B cell (primary cell): ENCODE measurements at regions of chr5 and their contacts with region 1.

Region 1: GRCh38 chr5:138035605-138036537 is 3.0 kb upstream of the FAM13B start:
- DNase-seq: peak; percentile 86
- ATAC-seq: peak; percentile 35
- H3K4me3 ChIP-seq: no peak overlapping the region
- H3K4me3 Mint-ChIP-seq: peak overlapping the region; percentile 4
- H3K27ac ChIP-seq: no peak overlapping the region
- H3K27ac Mint-ChIP-seq: no peak overlapping the region
- H3K4me1 ChIP-seq: peaks cover 19 to 26% of the 10 kb centered on the region in 2 donors
- H3K4me1 Mint-ChIP-seq: peaks cover 32% of the 10 kb centered on the region
- H3K27me3 ChIP-seq: no peaks in the 10 kb centered on the region
- H3K27me3 Mint-ChIP-seq: no peaks in the 10 kb centered on the region
- CTCF ChIP-seq: peak; percentile 97

Region 2: GRCh38 chr5:137695651-137696428 is 340.0 kb before region 1 on chr5:
- CTCF ChIA-PET with region 1: no interaction called
- POLR2A ChIA-PET with region 1: no interaction called
- intact Hi-C with region 1: no loop called
- DNase-seq: peak; percentile 7
- ATAC-seq: no peak
- H3K4me3 ChIP-seq: no peak overlapping the region
- H3K4me3 Mint-ChIP-seq: no peak overlapping the region
- H3K27ac ChIP-seq: no peak overlapping the region
- H3K27ac Mint-ChIP-seq: peak overlapping the region; percentile 3
- H3K4me1 ChIP-seq: peaks cover 7 to 10% of the 10 kb centered on the region in 2 donors
- H3K4me1 Mint-ChIP-seq: peaks cover 10% of the 10 kb centered on the region
- H3K27me3 ChIP-seq: no peaks in the 10 kb centered on the region
- H3K27me3 Mint-ChIP-seq: no peaks in the 10 kb centered on the region
- CTCF ChIP-seq: no peak

Region 3: DNA sequence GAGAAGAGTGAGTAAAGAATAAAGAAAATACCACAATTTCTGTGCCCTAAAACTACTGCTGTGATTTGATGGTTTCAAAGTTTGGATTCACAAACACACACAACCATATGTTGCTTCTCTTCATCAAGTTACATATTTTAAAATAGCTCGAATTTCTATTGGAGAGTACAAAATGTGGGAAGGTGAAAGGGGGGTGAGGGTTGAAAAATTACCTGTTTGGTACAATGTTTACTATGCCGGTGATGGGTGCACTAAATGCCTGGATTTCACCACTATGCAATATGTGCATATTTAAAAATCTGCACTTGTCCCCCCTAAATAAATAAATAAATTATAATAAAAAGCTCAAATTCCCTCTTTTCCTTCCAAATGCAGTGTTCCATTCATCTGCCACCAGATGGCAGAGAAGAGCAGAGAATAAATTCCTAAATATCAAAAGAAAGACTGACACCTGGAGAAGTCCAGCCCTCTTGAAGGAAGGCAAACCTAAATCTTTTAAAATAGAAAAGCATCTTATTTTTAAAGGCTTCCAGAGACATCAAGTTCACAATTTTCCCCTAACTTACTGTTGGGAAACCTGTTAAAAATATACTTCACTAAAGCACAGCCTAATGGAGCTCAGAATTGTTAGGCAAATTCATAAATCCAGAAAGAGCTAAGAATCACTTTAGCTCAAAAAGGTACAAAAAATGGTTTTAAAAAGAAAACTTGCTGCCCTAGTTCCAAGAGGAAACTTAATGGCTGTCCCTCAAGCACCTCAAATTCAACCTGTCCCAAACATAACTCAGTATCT is 256.9 kb before region 1 on chr5:
- CTCF ChIA-PET with region 1: interaction called, 26 read pairs
- POLR2A ChIA-PET with region 1: no interaction called
- intact Hi-C with region 1: no loop called
- DNase-seq: peak; percentile 57
- ATAC-seq: no peak
- H3K4me3 ChIP-seq: no peak overlapping the region
- H3K4me3 Mint-ChIP-seq: no peak overlapping the region
- H3K27ac ChIP-seq: no peak overlapping the region
- H3K27ac Mint-ChIP-seq: no peak overlapping the region
- H3K4me1 ChIP-seq: no peaks in the 10 kb centered on the region
- H3K4me1 Mint-ChIP-seq: peaks cover 1% of the 10 kb centered on the region
- H3K27me3 ChIP-seq: no peaks in the 10 kb centered on the region
- H3K27me3 Mint-ChIP-seq: no peaks in the 10 kb centered on the region
- CTCF ChIP-seq: peak; percentile 91

Region 4: DNA sequence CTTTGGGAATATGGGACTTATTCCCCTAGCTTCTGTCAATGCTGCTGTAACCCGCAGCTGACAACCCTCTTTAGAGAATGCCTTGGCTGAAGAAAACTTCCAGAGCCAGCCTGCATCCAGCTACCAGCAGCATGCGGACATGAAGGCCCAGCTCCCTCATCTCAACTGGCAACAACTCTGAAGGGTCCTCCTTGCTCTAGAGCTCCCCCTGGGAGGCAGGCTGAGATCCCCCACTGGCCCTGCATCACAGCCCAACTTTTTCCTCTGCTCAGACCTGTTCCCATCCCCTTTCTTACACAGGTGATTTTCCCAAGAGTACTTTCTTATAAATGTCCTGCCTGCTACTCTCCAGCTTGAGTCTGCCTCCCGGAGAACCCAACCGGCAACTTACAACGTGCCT is 29.2 kb after region 1 on chr5:
- CTCF ChIA-PET with region 1: interaction called, 101 read pairs
- POLR2A ChIA-PET with region 1: interaction called, 4 read pairs
- intact Hi-C with region 1: loop called (anchors 1 kb)
- DNase-seq: no peak
- ATAC-seq: no peak
- H3K4me3 ChIP-seq: no peak overlapping the region
- H3K4me3 Mint-ChIP-seq: no peak overlapping the region
- H3K27ac ChIP-seq: no peak overlapping the region
- H3K27ac Mint-ChIP-seq: no peak overlapping the region
- H3K4me1 ChIP-seq: no peaks in the 10 kb centered on the region
- H3K4me1 Mint-ChIP-seq: peaks cover 4% of the 10 kb centered on the region
- H3K27me3 ChIP-seq: no peaks in the 10 kb centered on the region
- H3K27me3 Mint-ChIP-seq: no peaks in the 10 kb centered on the region
- CTCF ChIP-seq: no peak

Region 5: GRCh38 chr5:138128334-138128733 is 92.5 kb after region 1 on chr5:
- CTCF ChIA-PET with region 1: interaction called, 22 read pairs
- POLR2A ChIA-PET with region 1: no interaction called
- intact Hi-C with region 1: loop called (anchors 1 kb)
- DNase-seq: no peak
- ATAC-seq: no peak
- H3K4me3 ChIP-seq: no peak overlapping the region
- H3K4me3 Mint-ChIP-seq: no peak overlapping the region
- H3K27ac ChIP-seq: no peak overlapping the region
- H3K27ac Mint-ChIP-seq: no peak overlapping the region
- H3K4me1 ChIP-seq: peaks cover 0 to 4% of the 10 kb centered on the region in 2 donors
- H3K4me1 Mint-ChIP-seq: peaks cover 1% of the 10 kb centered on the region
- H3K27me3 ChIP-seq: peaks cover 0 to 7% (median 0%) of the 10 kb centered on the region in 4 experiments
- H3K27me3 Mint-ChIP-seq: peaks cover 17% of the 10 kb centered on the region
- CTCF ChIP-seq: no peak

Region 6: DNA sequence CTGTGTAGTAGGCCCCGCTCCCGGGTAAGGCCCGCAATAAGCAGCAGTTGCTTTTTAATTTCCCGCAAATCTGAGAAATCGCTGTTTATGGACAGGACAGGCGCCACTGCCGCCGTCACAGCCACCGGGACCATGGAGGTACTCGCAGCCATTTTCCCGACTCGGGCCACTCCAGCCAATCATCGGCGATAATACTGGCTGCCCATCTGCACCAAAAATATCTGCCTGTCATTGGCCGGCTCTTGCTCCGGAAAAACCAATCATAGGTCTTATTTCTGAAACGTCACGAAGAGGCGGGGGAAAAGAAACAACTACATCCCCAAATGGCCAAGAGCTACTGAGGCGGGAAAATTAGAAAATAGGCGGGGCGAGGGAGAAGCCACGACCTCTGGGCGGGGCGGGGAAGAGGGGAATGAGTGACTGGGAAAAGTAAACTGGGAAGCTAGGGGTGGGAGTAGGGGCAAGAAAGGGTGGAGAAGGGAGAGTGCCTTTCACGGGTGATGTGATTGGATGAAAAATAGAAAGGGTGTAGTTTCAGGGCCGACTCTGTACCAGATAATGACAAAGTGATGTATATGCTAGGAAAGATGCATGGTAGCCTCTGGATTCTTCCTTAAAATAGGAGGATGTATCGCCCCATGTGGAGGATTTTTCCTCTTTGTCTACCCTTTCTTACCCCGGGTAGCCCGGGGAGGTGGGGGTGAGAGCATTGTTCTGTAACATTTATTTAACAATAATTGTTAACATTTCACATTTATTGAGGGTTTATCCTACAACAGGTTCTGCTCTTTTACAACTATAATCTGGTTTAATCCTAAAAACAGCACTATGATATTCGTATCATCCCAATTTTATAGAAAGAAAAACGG is 177.5 kb after region 1 on chr5 and contains the start of gene CDC23:
- CTCF ChIA-PET with region 1: no interaction called
- POLR2A ChIA-PET with region 1: no interaction called
- intact Hi-C with region 1: loop called (anchors 1 kb)
- DNase-seq: peak; percentile 95
- ATAC-seq: peak; percentile 97
- H3K4me3 ChIP-seq: peak within 1 kb of the TSS; percentile 77 to 99 (median 93)
- H3K4me3 Mint-ChIP-seq: peak within 1 kb of the TSS; percentile 93
- H3K27ac ChIP-seq: peak within 1 kb of the TSS; percentile 52 to 87
- H3K27ac Mint-ChIP-seq: peak within 1 kb of the TSS; percentile 92
- H3K4me1 ChIP-seq: peaks cover 10 to 20% of the 10 kb centered on the region in 2 donors
- H3K4me1 Mint-ChIP-seq: peaks cover 19% of the 10 kb centered on the region
- H3K27me3 ChIP-seq: no peaks in the 10 kb centered on the region
- H3K27me3 Mint-ChIP-seq: no peaks in the 10 kb centered on the region
- CTCF ChIP-seq: no peak
- total RNA-seq, gene CDC23: 29.7 and 35.4 TPM in 2 replicates

Region 7: DNA sequence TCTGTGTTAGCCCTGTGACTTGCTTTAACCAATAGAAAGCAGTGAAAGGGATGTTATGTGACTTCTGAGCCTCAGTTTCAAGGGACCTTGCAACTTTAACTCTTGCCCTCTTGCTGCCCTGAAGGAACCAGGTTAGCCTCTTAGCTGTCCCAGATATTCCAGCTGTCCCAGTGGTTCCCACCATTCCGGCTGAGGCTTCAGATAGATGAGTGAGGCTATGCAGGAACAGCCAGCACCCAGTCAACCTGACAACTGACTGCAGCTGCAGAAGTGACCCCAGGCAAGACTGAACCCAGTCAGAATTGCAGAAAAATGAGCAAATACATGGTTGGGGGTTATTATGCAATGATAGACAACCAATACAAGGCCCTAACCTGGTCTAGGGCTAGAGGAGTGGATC is 187.7 kb after region 1 on chr5:
- CTCF ChIA-PET with region 1: no interaction called
- POLR2A ChIA-PET with region 1: no interaction called
- intact Hi-C with region 1: no loop called
- DNase-seq: no peak
- ATAC-seq: no peak
- H3K4me3 ChIP-seq: no peak overlapping the region
- H3K4me3 Mint-ChIP-seq: no peak overlapping the region
- H3K27ac ChIP-seq: no peak overlapping the region
- H3K27ac Mint-ChIP-seq: no peak overlapping the region
- H3K4me1 ChIP-seq: peaks cover 0 to 4% of the 10 kb centered on the region in 2 donors
- H3K4me1 Mint-ChIP-seq: peaks cover 4% of the 10 kb centered on the region
- H3K27me3 ChIP-seq: peaks cover 0 to 12% (median 3%) of the 10 kb centered on the region in 4 experiments
- H3K27me3 Mint-ChIP-seq: peaks cover 36% of the 10 kb centered on the region
- CTCF ChIP-seq: no peak

Region 8: GRCh38 chr5:138352071-138352721 is 316.3 kb after region 1 on chr5 and contains the start of gene KDM3B:
- CTCF ChIA-PET with region 1: interaction called, 3 read pairs
- POLR2A ChIA-PET with region 1: no interaction called
- intact Hi-C with region 1: loop called (anchors 2 kb)
- DNase-seq: peak; percentile 94
- ATAC-seq: peak; percentile 86
- H3K4me3 ChIP-seq: peak within 1 kb of the TSS; percentile 78 to 96 (median 89)
- H3K4me3 Mint-ChIP-seq: peak within 1 kb of the TSS; percentile 95
- H3K27ac ChIP-seq: peak within 1 kb of the TSS; percentile 97
- H3K27ac Mint-ChIP-seq: peak within 1 kb of the TSS; percentile 96
- H3K4me1 ChIP-seq: peaks cover 25 to 30% of the 10 kb centered on the region in 2 donors
- H3K4me1 Mint-ChIP-seq: peaks cover 46% of the 10 kb centered on the region
- H3K27me3 ChIP-seq: no peaks in the 10 kb centered on the region
- H3K27me3 Mint-ChIP-seq: no peaks in the 10 kb centered on the region
- CTCF ChIP-seq: peak; percentile 90
- total RNA-seq, gene KDM3B: 99.9 and 110 TPM in 2 replicates

Region 9: DNA sequence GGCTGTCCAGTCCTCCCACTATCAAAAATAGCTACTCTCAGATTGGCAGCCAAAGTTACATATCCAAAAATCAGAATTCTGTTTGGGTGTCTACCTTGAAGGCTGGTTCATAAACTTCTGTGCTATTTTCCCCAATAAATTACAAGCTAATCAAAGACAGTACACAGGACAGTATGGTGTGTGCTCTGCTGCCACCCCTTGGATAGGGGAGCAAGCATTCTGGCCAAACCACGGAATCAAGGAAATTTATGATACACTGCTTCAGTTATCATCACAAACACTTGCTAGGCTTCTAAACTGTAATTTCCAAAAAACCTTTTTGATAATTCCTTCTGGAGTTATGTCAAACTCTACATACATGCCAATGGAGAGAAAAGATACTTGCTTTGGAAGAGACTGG is 491.3 kb after region 1 on chr5:
- CTCF ChIA-PET with region 1: no interaction called
- POLR2A ChIA-PET with region 1: no interaction called
- intact Hi-C with region 1: no loop called
- DNase-seq: no peak
- ATAC-seq: no peak
- H3K4me3 ChIP-seq: no peak overlapping the region
- H3K4me3 Mint-ChIP-seq: no peak overlapping the region
- H3K27ac ChIP-seq: no peak overlapping the region
- H3K27ac Mint-ChIP-seq: peak overlapping the region; percentile 67
- H3K4me1 ChIP-seq: peaks cover 0 to 4% of the 10 kb centered on the region in 2 donors
- H3K4me1 Mint-ChIP-seq: peaks cover 34% of the 10 kb centered on the region
- H3K27me3 ChIP-seq: no peaks in the 10 kb centered on the region
- H3K27me3 Mint-ChIP-seq: no peaks in the 10 kb centered on the region
- CTCF ChIP-seq: no peak

Region 10: DNA sequence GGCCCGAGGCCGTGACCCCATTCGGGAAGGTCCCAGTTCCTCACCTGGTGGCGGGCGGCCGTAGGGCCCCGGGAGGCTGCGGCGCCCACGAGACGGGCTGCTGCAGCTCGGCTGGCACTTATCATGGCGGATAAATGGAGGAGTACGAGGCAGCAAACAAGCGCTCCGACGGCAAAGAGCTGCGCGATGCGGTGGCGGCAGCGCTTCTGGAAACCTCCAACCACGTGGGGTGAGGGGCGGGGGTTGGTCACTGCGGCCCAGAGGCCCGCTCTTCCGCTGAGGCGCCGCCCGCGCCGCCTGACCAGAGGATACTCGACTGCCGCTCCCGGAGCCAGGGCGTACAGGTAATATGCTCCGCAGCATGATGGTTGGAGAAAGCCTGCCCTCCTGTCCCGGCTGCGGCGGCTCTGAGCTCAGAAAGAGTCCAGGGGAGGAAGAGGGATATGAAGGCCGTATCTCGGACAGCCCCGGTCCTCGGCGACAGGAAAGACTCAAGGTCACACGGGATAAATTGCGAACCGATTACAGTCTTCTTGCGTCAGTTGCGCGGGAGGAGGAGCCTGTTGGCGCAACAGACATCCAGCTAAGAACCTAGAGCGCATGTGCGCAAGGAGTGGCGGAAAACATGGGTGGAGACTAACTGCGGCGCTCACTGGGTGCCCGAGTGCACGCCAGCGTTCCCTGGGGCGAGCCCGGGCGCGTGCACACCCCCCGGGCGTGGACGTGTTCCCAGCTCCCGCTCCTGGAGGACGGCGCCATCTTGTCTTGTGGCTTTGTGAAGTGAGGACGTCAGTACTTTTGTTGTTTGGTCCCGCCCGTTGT is 539.5 kb after region 1 on chr5 and contains the start of gene HSPA9:
- CTCF ChIA-PET with region 1: no interaction called
- POLR2A ChIA-PET with region 1: no interaction called
- intact Hi-C with region 1: loop called (anchors 10 kb)
- DNase-seq: peak; percentile 100
- ATAC-seq: peak; percentile 85
- H3K4me3 ChIP-seq: peak within 1 kb of the TSS; percentile 80 to 98 (median 96)
- H3K4me3 Mint-ChIP-seq: peak within 1 kb of the TSS; percentile 96
- H3K27ac ChIP-seq: peak within 1 kb of the TSS; percentile 99 to 100
- H3K27ac Mint-ChIP-seq: peak within 1 kb of the TSS; percentile 100
- H3K4me1 ChIP-seq: peaks cover 16% of the 10 kb centered on the region in 2 donors
- H3K4me1 Mint-ChIP-seq: peaks cover 30% of the 10 kb centered on the region
- H3K27me3 ChIP-seq: no peaks in the 10 kb centered on the region
- H3K27me3 Mint-ChIP-seq: no peaks in the 10 kb centered on the region
- CTCF ChIP-seq: no peak
- total RNA-seq, gene HSPA9: 139 and 142 TPM in 2 replicates